ENCODE measurements at regions of chr10 and their contacts with region 1.

Region 1: DNA sequence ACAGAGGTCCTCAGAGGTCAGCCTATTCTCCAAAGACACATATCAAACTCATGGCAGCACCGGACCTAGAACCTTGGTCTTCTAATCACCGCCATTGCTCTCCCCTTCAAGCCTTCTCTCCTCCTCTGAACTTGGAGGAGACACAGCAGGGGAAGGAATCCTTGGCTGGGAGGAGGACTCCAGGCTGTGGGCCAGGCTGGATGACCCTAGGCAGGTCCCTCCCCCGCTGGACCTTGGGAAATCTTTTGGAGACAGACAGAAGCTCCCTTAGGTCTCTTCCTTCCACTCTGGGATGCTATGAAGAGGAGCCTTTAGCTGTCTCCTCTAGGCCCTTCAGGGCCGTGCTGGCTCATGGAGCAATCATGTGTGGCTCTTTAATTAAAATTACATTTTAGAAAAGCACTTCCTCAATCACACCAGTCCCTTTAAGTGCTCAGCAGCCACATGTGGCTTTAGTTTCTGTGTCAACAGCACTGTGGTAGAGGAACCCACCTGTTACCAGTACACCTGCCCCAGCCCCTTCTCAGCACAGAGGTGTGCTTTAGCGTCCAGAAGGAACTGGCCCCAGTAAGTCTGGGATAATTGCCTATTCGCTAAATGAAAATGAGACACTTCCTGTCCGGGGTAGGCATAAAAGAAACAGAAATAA is 238.2 kb downstream of the CELF2 start:
- DNase-seq: no peak
- ATAC-seq: peak; percentile 27 to 49
- H3K4me3 ChIP-seq: no peak overlapping the region
- H3K27ac ChIP-seq: peak overlapping the region; percentile 8
- H3K4me1 ChIP-seq: peaks cover 6% of the 10 kb centered on the region
- H3K27me3 ChIP-seq: no peaks in the 10 kb centered on the region

Region 2: GRCh38 chr10:10792681-10793080 is 463.2 kb before region 1 on chr10:
- intact Hi-C with region 1: loop called in 1 of 4 experiments (anchors 10 kb)
- DNase-seq: no peak
- ATAC-seq: peak; percentile 53 to 66
- H3K4me3 ChIP-seq: no peak overlapping the region
- H3K27ac ChIP-seq: no peak overlapping the region
- H3K4me1 ChIP-seq: peaks cover 2% of the 10 kb centered on the region
- H3K27me3 ChIP-seq: no peaks in the 10 kb centered on the region

Region 3: DNA sequence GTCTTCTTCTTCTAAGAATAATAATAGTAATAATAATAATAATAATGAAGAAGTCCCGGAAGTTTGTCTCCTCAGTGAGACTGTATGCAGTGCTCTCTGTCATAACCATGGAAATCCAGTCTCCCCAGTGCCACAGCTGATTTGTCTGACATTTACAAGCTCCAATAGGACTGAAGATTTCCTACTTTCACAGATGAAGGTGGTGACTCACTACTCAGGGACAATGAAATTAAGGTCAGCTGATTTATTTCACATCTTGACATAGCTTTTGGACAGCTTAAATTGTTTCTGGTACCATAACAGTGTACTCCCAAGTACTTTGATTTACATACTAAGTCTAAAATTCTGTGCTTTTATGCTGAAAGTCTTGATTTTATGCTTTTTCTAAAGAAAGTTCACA is 231.3 kb before region 1 on chr10:
- intact Hi-C with region 1: loop called in 2 of 4 experiments (anchors 5 to 10 kb)
- DNase-seq: no peak
- ATAC-seq: peak; percentile 36 to 91
- H3K4me3 ChIP-seq: no peak overlapping the region
- H3K27ac ChIP-seq: no peak overlapping the region
- H3K4me1 ChIP-seq: peaks cover 12% of the 10 kb centered on the region
- H3K27me3 ChIP-seq: no peaks in the 10 kb centered on the region

Region 4: DNA sequence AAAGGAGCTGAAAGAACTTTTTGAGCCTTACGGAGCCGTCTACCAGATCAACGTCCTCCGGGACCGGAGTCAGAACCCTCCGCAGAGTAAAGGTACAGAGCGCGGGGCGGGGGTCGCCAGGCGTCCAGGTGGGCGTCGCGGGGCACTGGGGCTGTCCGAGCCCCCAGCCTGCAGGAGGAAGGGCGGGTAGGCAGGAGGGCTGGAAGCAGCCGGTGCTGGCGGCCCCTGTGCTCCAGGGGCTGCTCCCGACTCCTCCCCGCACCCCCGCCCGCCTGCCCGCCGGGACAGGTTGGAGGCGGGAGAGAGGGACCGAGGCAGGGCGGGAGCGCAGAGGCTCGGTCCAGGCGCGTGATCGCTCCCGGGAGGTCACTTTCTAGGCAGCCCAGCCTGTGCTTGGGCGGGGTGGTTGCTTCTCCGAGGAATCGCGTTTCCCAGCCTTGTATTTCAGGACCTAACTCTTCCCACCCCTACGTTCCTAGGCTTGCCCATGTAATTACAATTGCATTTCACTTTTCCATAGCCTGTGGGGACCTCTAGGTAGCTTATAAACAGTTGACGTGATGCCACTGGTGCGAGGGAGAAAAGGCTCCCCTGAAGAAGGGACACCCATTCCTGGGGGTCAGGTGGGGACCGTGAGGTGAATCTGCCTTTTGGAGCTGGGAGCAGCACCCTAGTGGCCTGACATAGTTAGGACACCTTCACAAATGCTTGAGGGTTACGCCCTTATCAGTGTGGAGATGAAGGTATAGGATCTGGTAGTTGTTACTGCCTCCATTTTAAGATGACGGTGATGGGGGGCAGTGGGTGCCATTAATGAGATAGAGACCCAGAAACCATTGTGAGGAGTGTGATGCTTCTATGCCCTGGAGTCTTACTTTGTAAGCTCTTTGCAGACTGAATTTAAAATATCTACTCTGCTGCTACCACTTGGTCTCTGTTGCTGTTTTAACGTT is 90.1 kb before region 1 on chr10:
- intact Hi-C with region 1: loop called in 1 of 4 experiments (anchors 10 kb)
- DNase-seq: peak; percentile 45 to 88 (median 86)
- ATAC-seq: peak; percentile 74 to 78
- H3K4me3 ChIP-seq: peak overlapping the region; percentile 78
- H3K27ac ChIP-seq: peak overlapping the region; percentile 90
- H3K4me1 ChIP-seq: peaks cover 14% of the 10 kb centered on the region
- H3K27me3 ChIP-seq: no peaks in the 10 kb centered on the region

Region 5: GRCh38 chr10:11178606-11179515 is 77.1 kb before region 1 on chr10:
- intact Hi-C with region 1: loop called in 1 of 4 experiments (anchors 5 kb)
- DNase-seq: peak; percentile 35 to 83 (median 71)
- ATAC-seq: peak; percentile 70 to 80
- H3K4me3 ChIP-seq: no peak overlapping the region
- H3K27ac ChIP-seq: peak overlapping the region; percentile 64
- H3K4me1 ChIP-seq: peaks cover 13% of the 10 kb centered on the region
- H3K27me3 ChIP-seq: no peaks in the 10 kb centered on the region

Region 6: GRCh38 chr10:11225935-11226334 is 30.0 kb before region 1 on chr10:
- intact Hi-C with region 1: no loop called
- DNase-seq: peak in 2 of 3 donors; percentile 33 to 69
- ATAC-seq: peak; percentile 10 to 56
- H3K4me3 ChIP-seq: no peak overlapping the region
- H3K27ac ChIP-seq: no peak overlapping the region
- H3K4me1 ChIP-seq: peaks cover 11% of the 10 kb centered on the region
- H3K27me3 ChIP-seq: no peaks in the 10 kb centered on the region